A549 (cell line): ENCODE measurements at regions of chr20 and their contacts with region 1.

Region 1: GRCh38 chr20:58650776-58651558 is at the start of gene STX16:
- DNase-seq: peak; percentile 96 to 99
- ATAC-seq: peak; percentile 96 to 98
- H3K4me3 ChIP-seq: peak within 1 kb of the TSS; percentile 91
- H3K27ac ChIP-seq: peak within 1 kb of the TSS; percentile 90 to 95
- H3K4me1 ChIP-seq: peaks cover 26% of the 10 kb centered on the region; the same call in 2 of the 3 replicates
- CTCF ChIP-seq: peak; percentile 58
- EP300 ChIP-seq: no peak
- POLR2A ChIP-seq: peak; percentile 44
- RAD21 ChIP-seq: peak; percentile 0 to 35; a peak in 3 of 5 replicates
- polyA plus RNA-seq, gene STX16: 63.0 and 71.6 TPM in 2 replicates

Region 2: DNA sequence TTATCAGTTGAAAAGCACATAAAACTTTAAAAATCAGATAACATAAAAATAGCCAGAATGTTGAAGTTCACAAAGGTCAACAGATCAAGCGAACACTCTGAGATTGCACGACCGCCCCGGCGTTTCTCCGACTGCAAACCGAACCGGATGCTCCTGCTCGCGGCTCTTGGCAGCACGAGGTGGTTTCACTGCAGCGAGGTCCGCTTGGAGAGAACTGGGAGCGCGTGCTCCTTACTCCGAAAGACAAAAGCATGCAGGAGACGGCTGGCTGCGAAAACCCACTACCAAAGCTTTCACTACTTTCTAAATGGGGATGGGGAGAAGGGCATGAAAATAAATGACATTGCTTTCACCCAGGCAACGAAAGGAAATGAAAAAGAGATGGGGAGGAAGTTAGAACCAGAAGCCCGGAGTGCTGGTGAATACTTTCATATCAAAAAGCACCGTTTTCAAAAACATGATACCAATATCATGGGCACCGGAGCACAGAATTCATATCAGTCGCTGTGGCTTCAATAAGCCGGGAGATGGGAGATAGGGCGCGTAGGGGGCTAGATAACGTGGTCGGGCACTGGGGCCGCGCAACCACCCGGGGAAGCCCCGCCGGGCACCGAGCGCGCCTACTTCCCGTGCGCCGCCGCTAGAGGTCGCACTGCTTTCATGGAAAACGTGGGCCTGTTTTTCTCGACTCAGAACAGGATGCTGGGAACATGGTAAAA is 414.2 kb before region 1 on chr20:
- CTCF ChIA-PET with region 1: interaction called, 36 read pairs
- POLR2A ChIA-PET with region 1: no interaction called
- DNase-seq: peak; percentile 67 to 84
- ATAC-seq: peak; percentile 94 to 95
- H3K4me3 ChIP-seq: peak overlapping the region; percentile 53
- H3K27ac ChIP-seq: peak overlapping the region; percentile 52 to 74; a peak in 5 of 6 replicates
- H3K4me1 ChIP-seq: peaks cover 4% of the 10 kb centered on the region; the same call in 1 of the 3 replicates
- CTCF ChIP-seq: peak; percentile 93
- EP300 ChIP-seq: no peak
- POLR2A ChIP-seq: no peak
- RAD21 ChIP-seq: peak; percentile 89 to 93

Region 3: GRCh38 chr20:58246346-58246745 is 404.6 kb before region 1 on chr20:
- CTCF ChIA-PET with region 1: interaction called, 20 read pairs
- POLR2A ChIA-PET with region 1: interaction called, 4 read pairs
- DNase-seq: peak; percentile 25 to 67
- ATAC-seq: peak; percentile 70 to 86
- H3K4me3 ChIP-seq: no peak overlapping the region
- H3K27ac ChIP-seq: no peak overlapping the region
- H3K4me1 ChIP-seq: peaks cover 6% of the 10 kb centered on the region
- CTCF ChIP-seq: peak; percentile 51
- EP300 ChIP-seq: no peak
- POLR2A ChIP-seq: no peak
- RAD21 ChIP-seq: peak; percentile 52 to 62; a peak in 4 of 5 replicates

Region 4: GRCh38 chr20:58388882-58389323 is 262.1 kb before region 1 on chr20 and contains the start of gene VAPB:
- CTCF ChIA-PET with region 1: interaction called, 4 read pairs
- POLR2A ChIA-PET with region 1: interaction called, 23 read pairs
- DNase-seq: peak; percentile 60 to 96
- ATAC-seq: peak; percentile 99 to 100
- H3K4me3 ChIP-seq: peak within 1 kb of the TSS; percentile 100
- H3K27ac ChIP-seq: peak within 1 kb of the TSS; percentile 91 to 99
- H3K4me1 ChIP-seq: peaks cover 16% of the 10 kb centered on the region
- CTCF ChIP-seq: no peak
- EP300 ChIP-seq: no peak
- POLR2A ChIP-seq: peak; percentile 88
- RAD21 ChIP-seq: no peak
- polyA plus RNA-seq, gene VAPB: 39.6 and 44.0 TPM in 2 replicates

Region 5: DNA sequence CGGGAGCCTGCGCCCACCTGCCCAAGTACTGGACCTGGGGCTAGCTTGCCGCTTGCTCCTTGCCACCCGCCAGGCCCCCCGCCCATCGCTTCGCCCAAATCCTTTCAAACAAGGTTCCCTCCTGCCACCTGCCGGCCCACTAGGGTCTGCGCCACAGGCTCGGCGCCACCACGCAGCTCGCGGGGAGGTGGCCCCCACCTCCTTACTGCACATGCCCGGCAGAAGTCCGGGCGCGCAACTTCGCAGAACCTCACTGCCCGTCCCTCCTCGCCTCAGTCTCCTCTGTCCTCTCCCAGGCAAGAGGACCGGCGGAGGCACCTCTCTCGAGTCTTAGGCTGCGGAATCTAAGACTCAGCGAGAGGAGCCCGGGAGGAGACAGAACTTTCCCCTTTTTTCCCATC is 188.5 kb after region 1 on chr20:
- CTCF ChIA-PET with region 1: interaction called, 10 read pairs
- POLR2A ChIA-PET with region 1: interaction called, 5 read pairs
- DNase-seq: peak; percentile 57 to 70
- ATAC-seq: peak; percentile 87 to 92
- H3K4me3 ChIP-seq: peak overlapping the region; percentile 46
- H3K27ac ChIP-seq: no peak overlapping the region
- H3K4me1 ChIP-seq: peaks cover 8% of the 10 kb centered on the region
- CTCF ChIP-seq: peak; percentile 60
- EP300 ChIP-seq: no peak
- POLR2A ChIP-seq: no peak
- RAD21 ChIP-seq: peak; percentile 71 to 81